Left cardiac atrium (tissue), 4 donors: ENCODE measurements at regions of chr4 and their contacts with region 1.

Region 1: GRCh38 chr4:55554453-55555030 is 7.8 kb upstream of the CLOCK start:
- DNase-seq: no peak
- ATAC-seq: peak in 1 of 2 donors; percentile 56

Region 2: GRCh38 chr4:55444827-55445226 is 109.7 kb before region 1 on chr4:
- intact Hi-C with region 1: loop called in 1 of 2 experiments (anchors 5 kb)
- DNase-seq: no peak
- ATAC-seq: peak in 1 of 2 donors; percentile 38